Transverse colon (tissue), 4 donors: ENCODE measurements at regions of chr19 and their contacts with region 1.

Region 1: DNA sequence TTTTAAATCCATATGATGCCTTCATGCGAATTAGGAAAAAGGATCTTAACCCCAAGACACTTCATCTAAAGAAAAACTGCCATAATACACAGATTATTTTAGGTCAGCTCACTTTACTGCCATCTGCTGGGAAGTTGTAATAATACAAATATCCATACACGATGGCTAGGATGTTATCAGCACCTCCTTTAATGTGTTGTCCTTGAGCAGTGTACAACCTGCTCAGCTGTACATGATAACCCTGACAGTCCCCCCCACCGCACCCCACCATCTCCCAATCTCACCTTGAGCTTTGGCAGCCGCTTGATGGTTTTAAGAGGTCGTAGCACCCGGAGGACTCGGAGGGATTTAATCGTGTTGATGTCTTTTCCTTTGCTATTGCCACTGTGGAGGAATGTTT is 112.2 kb downstream of the IER2 start:
- DNase-seq: no peak
- H3K4me3 ChIP-seq: no peak overlapping the region
- H3K27ac ChIP-seq: no peak overlapping the region
- H3K4me1 ChIP-seq: no peaks in the 10 kb centered on the region
- H3K27me3 ChIP-seq: no peaks in the 10 kb centered on the region
- CTCF ChIP-seq: peak; percentile 57 to 63 (median 60)
- EP300 ChIP-seq: no peak
- POLR2A ChIP-seq: no peak

Region 2: GRCh38 chr19:12965017-12965811 is 297.2 kb before region 1 on chr19:
- in situ Hi-C with region 1: loop called in 3 of 4 experiments (anchors 10 to 25 kb)
- intact Hi-C with region 1: no loop called
- DNase-seq: peak; percentile 88
- H3K4me3 ChIP-seq: peak overlapping the region; percentile 22 to 63 (median 36)
- H3K27ac ChIP-seq: peak overlapping the region; percentile 67 to 78 (median 76)
- H3K4me1 ChIP-seq: peaks cover 0 to 10% (median 6%) of the 10 kb centered on the region in 4 donors
- H3K27me3 ChIP-seq: no peaks in the 10 kb centered on the region
- CTCF ChIP-seq: peak; percentile 87 to 99 (median 92)
- EP300 ChIP-seq: no peak
- POLR2A ChIP-seq: no peak

Region 3: GRCh38 chr19:12974301-12975220 is 287.9 kb before region 1 on chr19:
- in situ Hi-C with region 1: loop called (anchors 5 to 25 kb)
- intact Hi-C with region 1: loop called (anchors 5 kb)
- DNase-seq: no peak
- H3K4me3 ChIP-seq: no peak overlapping the region
- H3K27ac ChIP-seq: no peak overlapping the region
- H3K4me1 ChIP-seq: peaks cover 0 to 3% (median 0%) of the 10 kb centered on the region in 4 donors
- H3K27me3 ChIP-seq: no peaks in the 10 kb centered on the region
- CTCF ChIP-seq: no peak
- EP300 ChIP-seq: no peak
- POLR2A ChIP-seq: no peak

Region 4: DNA sequence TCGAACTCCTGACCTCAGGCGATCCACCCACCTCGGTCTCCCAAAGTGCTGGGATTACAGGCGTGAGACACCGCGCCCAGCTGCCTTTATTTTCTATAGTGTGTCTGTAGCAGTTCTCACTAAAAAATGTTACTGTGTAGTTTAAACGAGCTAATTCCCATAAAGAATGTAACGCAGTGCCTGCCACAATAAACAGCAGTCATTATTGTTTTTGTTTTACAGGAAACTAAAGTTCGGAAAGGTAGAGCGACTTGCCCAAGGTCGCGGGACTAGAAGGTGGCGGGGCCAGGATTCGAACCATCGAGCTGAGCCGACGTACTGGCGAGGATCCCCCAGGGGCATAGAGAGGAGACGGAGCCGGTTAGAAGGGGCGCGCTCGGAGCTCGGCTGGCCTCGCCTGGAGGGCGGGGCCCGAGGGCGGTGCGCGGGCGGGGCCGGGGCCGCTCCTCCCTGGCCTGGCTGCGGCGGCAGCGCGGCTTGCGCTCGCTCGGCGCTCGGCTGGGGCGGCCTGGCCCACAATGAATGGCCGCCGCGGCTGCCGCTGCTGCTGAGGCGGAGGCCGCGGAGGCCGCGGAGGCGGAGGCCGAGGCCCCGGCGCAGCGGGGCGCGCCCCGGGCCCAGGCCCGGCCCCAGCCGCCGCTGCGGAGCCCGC is 144.6 kb before region 1 on chr19 and contains the start of gene NACC1:
- in situ Hi-C with region 1: loop called in 1 of 4 experiments (anchors 25 kb)
- intact Hi-C with region 1: no loop called
- DNase-seq: peak; percentile 91
- H3K4me3 ChIP-seq: peak within 1 kb of the TSS; percentile 84 to 99 (median 92)
- H3K27ac ChIP-seq: peak within 1 kb of the TSS; percentile 83 to 89 (median 86)
- H3K4me1 ChIP-seq: peaks cover 11 to 39% (median 34%) of the 10 kb centered on the region in 4 donors
- H3K27me3 ChIP-seq: no peaks in the 10 kb centered on the region
- CTCF ChIP-seq: peak in 2 of 5 experiments; percentile 11 to 23
- EP300 ChIP-seq: no peak
- POLR2A ChIP-seq: no peak
- total RNA-seq, gene NACC1: 31.6 to 54.2 (median 36.5) TPM

Region 5: DNA sequence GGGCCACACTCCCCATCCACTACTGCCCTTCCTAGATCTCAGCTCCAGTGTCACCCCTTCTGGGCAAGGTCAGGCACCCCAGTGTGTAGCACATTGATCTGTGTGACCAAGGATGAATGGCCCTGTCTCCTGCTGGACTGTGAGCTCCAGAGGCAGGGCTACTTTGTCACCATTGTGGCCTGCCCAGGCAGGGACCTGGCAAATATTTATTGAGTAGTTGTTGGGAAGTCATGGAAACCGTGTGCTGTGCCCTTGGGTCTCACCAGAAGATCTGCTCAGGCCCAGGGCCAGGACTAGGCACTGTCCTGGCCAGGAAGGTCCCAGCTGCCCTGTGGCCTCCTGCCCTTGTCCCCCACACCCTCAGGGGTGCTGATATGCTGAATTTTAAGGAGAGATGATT is 133.9 kb before region 1 on chr19:
- in situ Hi-C with region 1: loop called in 1 of 4 experiments (anchors 25 kb)
- intact Hi-C with region 1: loop called (anchors 5 kb)
- DNase-seq: no peak
- H3K4me3 ChIP-seq: no peak overlapping the region
- H3K27ac ChIP-seq: no peak overlapping the region
- H3K4me1 ChIP-seq: peaks cover 0 to 3% (median 0%) of the 10 kb centered on the region in 4 donors
- H3K27me3 ChIP-seq: no peaks in the 10 kb centered on the region
- CTCF ChIP-seq: no peak
- EP300 ChIP-seq: no peak
- POLR2A ChIP-seq: no peak

Region 6: DNA sequence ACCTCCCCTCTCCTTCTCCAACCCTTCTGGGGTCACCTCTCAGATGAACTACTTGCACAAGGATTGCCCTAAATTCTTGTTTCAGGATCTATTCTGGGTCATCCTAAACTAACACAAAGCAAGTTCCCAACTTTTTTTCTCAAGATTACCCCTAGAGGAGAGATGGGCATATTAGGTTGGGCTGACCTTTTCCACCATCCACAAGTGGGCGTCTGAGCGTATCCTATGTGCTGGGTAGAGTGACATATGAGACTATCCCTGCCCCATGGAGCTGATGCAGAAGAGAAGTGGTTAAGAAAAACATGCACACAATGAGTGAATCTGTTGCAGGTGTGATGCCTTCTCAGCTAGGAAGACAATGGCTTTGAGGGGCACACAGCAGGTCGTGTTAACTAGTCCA is 111.2 kb after region 1 on chr19:
- in situ Hi-C with region 1: no loop called
- intact Hi-C with region 1: no loop called
- DNase-seq: no peak
- H3K4me3 ChIP-seq: no peak overlapping the region
- H3K27ac ChIP-seq: no peak overlapping the region
- H3K4me1 ChIP-seq: no peaks in the 10 kb centered on the region
- H3K27me3 ChIP-seq: no peaks in the 10 kb centered on the region
- CTCF ChIP-seq: no peak
- EP300 ChIP-seq: no peak
- POLR2A ChIP-seq: no peak